Activated naive CD8-positive, alpha-beta T cell treated with anti-CD3 and anti-CD28 coated beads, Interleukin-2, amount 10 ng/mL, durations not matched to agents 7 days and 5 days (primary cell): ENCODE measurements at regions of chr14 and their contacts with region 1.

Region 1: DNA sequence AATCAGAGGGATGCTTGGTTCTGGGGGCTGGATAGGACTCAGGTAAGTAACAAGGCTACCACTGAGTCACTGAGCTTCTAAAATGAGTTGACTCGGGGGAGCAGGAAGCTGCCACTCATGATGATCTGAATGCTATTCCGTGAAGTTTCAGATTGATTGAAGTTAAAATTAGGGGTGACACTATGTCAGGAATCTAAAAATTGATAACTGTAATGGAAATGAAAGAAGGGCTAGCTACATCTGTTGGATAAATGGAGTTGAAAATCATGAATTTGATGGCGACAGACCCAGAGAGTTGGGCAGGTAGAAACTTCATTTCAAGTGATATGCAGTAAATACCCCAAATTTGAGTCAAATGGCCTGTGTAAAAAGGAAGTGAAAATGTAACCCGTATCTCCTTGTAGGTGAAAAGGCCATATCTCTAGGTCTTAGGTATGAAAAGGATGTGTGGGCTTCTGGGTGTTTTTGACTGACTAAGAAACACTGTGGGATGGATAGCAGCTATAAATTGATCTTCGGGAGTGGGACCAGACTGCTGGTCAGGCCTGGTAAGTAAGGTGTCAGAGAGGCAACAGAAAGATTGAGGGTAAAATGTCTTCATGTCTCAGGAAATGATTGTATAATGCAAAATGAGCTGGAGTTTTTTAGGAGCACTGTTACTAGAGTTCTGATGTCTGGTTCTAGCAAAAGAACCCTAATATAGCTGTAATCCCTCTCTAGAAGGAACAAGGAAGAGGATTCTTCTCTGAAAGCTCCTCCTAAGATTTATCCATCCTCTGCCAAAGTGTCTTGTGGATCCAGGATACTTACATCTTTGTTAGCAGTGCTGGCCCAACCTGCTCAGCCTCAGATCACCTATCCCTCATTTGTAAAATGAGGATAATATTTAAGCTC is 57.3 kb downstream of the DAD1 start:
- DNase-seq: no peak
- ATAC-seq: peak; percentile 23
- H3K4me3 Mint-ChIP-seq: peak overlapping the region; percentile 82
- H3K27ac Mint-ChIP-seq: peak overlapping the region; percentile 88
- H3K4me1 Mint-ChIP-seq: peaks cover 87% of the 10 kb centered on the region
- H3K27me3 Mint-ChIP-seq: no peaks in the 10 kb centered on the region

Region 2: GRCh38 chr14:22519877-22520685 is 11.6 kb before region 1 on chr14:
- POLR2A ChIA-PET with region 1: interaction called, 652 read pairs
- DNase-seq: no peak
- ATAC-seq: no peak
- H3K4me3 Mint-ChIP-seq: peak overlapping the region; percentile 99
- H3K27ac Mint-ChIP-seq: peak overlapping the region; percentile 98
- H3K4me1 Mint-ChIP-seq: peaks cover 74% of the 10 kb centered on the region
- H3K27me3 Mint-ChIP-seq: no peaks in the 10 kb centered on the region

Region 3: DNA sequence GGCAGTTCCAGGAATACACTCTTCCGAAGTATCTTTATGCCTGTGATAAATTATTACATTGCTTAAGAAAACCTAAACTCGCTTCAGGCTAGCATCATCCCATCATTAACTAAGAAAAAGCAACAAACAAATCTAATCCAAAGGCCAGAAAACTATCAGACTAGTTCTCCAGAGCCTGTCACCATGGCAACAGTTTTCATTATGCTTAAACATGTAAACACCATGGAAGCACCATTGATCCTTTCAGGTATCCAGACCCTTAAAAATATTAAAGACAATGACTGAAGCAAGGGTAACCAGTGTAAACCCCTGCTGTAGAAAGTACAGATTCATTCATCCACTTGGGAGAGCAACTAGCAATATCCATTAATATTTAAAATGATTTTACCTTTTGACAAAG is 47.5 kb after region 1 on chr14:
- POLR2A ChIA-PET with region 1: no interaction called
- DNase-seq: no peak
- ATAC-seq: no peak
- H3K4me3 Mint-ChIP-seq: peak overlapping the region; percentile 33
- H3K27ac Mint-ChIP-seq: peak overlapping the region; percentile 27
- H3K4me1 Mint-ChIP-seq: peaks cover 46% of the 10 kb centered on the region
- H3K27me3 Mint-ChIP-seq: no peaks in the 10 kb centered on the region

Region 4: DNA sequence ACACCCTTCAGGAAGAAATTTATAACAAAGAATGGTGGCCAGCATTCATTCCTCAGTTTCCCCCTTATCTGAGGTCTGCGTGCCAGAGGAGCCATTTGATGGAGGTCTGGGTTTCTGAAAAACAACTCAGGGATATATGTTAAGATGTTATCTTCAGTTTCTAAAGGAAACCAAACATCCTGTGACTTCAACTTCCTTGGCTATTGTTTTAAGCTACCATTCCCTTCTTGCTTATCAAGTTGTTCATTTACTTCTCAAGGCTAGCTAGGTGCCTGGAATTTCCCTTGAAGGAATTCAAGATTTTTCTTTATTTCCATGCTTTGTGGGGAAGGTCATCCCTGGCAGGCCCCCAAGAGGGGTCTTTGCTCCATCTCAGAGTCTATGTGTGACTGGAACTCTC is 207.7 kb after region 1 on chr14:
- POLR2A ChIA-PET with region 1: no interaction called
- DNase-seq: no peak
- ATAC-seq: no peak
- H3K4me3 Mint-ChIP-seq: no peak overlapping the region
- H3K27ac Mint-ChIP-seq: no peak overlapping the region
- H3K4me1 Mint-ChIP-seq: peaks cover 15% of the 10 kb centered on the region
- H3K27me3 Mint-ChIP-seq: peaks cover 9% of the 10 kb centered on the region